Motor neuron (in vitro differentiated cells): ENCODE measurements at regions of chr12 and their contacts with region 1.

Region 1: DNA sequence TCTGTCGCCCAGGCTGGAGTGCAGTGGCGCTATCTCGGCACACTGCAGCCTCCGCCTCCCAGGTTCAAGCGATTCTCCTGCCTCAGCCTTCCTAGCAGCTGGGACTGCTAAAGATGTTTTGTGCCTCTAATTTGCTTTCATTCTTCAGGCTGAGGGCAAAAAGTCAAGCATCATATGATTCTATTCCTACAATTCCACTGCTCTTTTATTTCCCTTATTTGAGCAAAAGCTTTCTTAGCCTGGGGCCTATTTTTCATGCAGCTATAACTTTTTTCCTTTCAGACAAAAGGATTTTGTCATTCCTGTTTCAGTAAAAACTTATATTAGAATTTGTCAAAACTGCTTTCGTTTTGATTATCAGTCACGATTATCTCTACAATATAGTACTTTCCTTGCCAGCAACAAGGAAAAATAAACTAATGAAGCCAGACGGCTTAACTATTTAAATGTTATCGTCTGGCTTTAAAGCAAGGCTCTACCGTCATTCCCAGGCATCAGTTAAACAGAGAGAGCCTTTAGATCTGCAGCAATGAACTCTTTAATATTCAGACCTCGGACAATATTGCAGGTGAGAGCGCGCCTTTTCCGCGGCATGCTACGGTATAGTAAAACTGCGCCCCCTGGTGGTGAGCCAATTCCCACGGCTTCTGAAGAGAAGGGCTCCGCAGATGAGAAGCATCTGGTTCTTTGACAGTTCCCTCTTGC is 1.4 kb upstream of the SLC2A13 start:
- ATAC-seq: peak in 6 of 8 experiments; percentile 7 to 21 (median 8)
- H3K4me3 ChIP-seq: no peak overlapping the region
- H3K27ac ChIP-seq: no peak overlapping the region
- H3K4me1 ChIP-seq: peaks cover 7 to 19% of the 10 kb centered on the region in 2 donors

Region 2: DNA sequence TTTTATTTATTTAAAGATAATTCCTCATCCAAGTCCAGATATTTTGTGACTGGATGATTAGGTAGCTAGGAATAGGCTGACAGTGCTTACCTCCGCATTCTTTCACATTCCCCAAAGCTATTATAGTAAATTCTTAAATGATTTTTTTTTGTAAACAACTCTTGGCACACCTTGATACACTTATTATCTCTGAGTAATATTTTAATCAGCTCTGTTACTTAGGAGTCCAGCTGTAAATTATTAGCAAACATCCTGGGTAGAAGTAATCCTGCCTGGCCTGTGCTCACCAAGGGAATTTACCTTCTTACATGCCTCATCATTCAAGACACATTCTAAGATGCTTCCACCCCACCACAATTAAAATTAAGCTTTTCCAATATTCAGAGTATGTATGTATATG is 187.5 kb before region 1 on chr12:
- in situ Hi-C with region 1: no loop called
- ATAC-seq: no peak
- H3K4me3 ChIP-seq: no peak overlapping the region
- H3K27ac ChIP-seq: no peak overlapping the region
- H3K4me1 ChIP-seq: peaks cover 0 to 3% of the 10 kb centered on the region in 2 donors

Region 3: GRCh38 chr12:40010899-40011774 is 96.1 kb before region 1 on chr12:
- in situ Hi-C with region 1: loop called in 3 of 9 experiments (anchors 10 to 25 kb)
- ATAC-seq: peak in 4 of 8 experiments; percentile 76 to 97 (median 92)
- H3K4me3 ChIP-seq: no peak overlapping the region
- H3K27ac ChIP-seq: no peak overlapping the region
- H3K4me1 ChIP-seq: no peaks in the 10 kb centered on the region